Vagina (tissue), 2 donors: ENCODE measurements at regions of chr6 and their contacts with region 1.

Region 1: GRCh38 chr6:106560996-106561685 is 68.2 kb downstream of the RTN4IP1 start:
- DNase-seq: no peak
- H3K4me3 ChIP-seq: no peak overlapping the region
- H3K27ac ChIP-seq: peak overlapping the region; percentile 67
- H3K4me1 ChIP-seq: peaks cover 27% of the 10 kb centered on the region
- H3K27me3 ChIP-seq: no peaks in the 10 kb centered on the region
- CTCF ChIP-seq: no peak
- POLR2A ChIP-seq: no peak

Region 2: GRCh38 chr6:106339334-106340029 is 221.7 kb before region 1 on chr6:
- intact Hi-C with region 1: loop called (anchors 10 kb)
- DNase-seq: no peak
- H3K4me3 ChIP-seq: no peak overlapping the region
- H3K27ac ChIP-seq: no peak overlapping the region
- H3K4me1 ChIP-seq: no peaks in the 10 kb centered on the region
- H3K27me3 ChIP-seq: no peaks in the 10 kb centered on the region
- CTCF ChIP-seq: peak; percentile 25 to 40 (median 28)
- POLR2A ChIP-seq: no peak